CD4-positive, alpha-beta memory T cell (primary cell): ENCODE measurements at regions of chr14 and their contacts with region 1.

Region 1: DNA sequence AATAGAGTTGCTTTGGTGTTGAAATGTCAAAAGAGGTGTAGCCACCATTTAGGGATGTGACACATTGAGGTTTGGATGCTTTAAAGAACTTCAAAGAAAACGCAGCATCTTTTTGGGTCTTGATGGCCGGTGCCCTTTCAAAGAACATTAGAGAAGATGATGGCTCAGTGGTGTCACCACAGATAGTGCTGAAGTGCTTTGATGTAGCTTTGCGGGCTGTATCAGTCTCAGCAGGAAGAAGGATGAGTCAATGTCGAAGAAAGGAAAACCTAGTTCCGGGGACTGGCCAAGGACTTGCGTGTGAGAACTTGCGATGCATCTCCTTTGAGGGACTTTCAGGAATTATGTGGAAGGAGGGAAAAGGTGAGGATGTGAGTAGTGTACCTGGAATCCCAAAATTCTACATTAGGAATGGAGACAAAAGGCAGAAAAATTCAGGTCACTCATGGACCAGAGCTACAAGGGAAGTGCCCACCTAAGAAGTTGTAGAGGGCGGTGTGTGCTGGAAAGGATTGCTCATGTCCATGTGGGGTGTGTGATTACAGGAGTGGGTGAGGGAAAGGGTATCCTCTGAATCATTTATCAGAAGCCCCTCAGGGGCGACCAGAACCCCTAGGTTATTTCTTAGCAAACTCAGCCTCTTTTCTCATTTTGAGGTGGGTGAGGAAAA is 39.7 kb upstream of the GZMB start:
- DNase-seq: peak; percentile 74 to 88 (median 76)
- H3K4me3 ChIP-seq: peak overlapping the region; percentile 39 to 49
- H3K4me3 Mint-ChIP-seq: peak overlapping the region; percentile 76 to 92 (median 84)
- H3K27ac ChIP-seq: peak overlapping the region; percentile 25
- H3K27ac Mint-ChIP-seq: peak overlapping the region; percentile 89 to 97 (median 93)
- H3K4me1 ChIP-seq: peaks cover 31% of the 10 kb centered on the region
- H3K4me1 Mint-ChIP-seq: peaks cover 26 to 48% (median 34%) of the 10 kb centered on the region in 4 donors
- H3K27me3 ChIP-seq: no peaks in the 10 kb centered on the region
- H3K27me3 Mint-ChIP-seq: no peaks in the 10 kb centered on the region

Region 2: GRCh38 chr14:24481622-24482324 is 191.9 kb before region 1 on chr14:
- CTCF ChIA-PET with region 1: interaction called, 14 read pairs
- POLR2A ChIA-PET with region 1: interaction called, 4 read pairs
- intact Hi-C with region 1: loop called (anchors 2 kb)
- DNase-seq: peak in 4 of 5 donors; percentile 18 to 38 (median 25)
- H3K4me3 ChIP-seq: no peak overlapping the region
- H3K4me3 Mint-ChIP-seq: peak overlapping the region in 5 of 8 donors; percentile 38 to 61 (median 51)
- H3K27ac ChIP-seq: no peak overlapping the region
- H3K27ac Mint-ChIP-seq: peak overlapping the region in 4 of 7 donors; percentile 4 to 57 (median 26)
- H3K4me1 ChIP-seq: peaks cover 17% of the 10 kb centered on the region
- H3K4me1 Mint-ChIP-seq: peaks cover 0 to 29% (median 20%) of the 10 kb centered on the region in 4 donors
- H3K27me3 ChIP-seq: no peaks in the 10 kb centered on the region
- H3K27me3 Mint-ChIP-seq: no peaks in the 10 kb centered on the region

Region 3: DNA sequence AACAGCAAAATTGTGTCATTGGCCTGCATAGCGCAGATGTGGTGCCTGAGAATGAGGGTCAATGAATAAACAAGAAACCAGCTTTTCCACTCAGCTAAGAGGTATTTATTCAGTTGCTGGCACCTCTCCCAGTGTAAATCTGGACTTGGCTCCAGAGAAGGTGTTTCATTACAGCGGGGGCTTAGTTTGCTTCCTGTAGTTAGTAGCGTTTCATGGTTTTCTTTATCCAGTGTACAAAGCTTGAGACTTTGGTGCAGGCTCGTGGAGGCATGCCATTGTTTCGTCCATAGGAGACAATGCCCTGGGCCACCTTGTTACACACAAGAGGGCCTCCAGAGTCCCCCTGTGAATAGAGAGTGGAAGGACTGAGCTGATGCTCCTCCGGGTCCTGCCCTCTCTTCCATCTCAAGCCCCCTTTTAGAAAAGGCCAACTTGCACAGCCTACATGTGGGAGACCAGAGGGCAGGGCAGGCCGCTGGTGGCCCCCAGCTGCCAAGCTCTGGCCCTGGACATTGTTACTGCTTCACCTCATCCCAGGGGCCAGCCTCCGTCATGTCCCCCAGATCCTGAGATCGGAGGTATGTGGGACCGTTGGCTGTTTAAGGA is 42.7 kb before region 1 on chr14:
- CTCF ChIA-PET with region 1: no interaction called
- POLR2A ChIA-PET with region 1: no interaction called
- intact Hi-C with region 1: no loop called
- DNase-seq: no peak
- H3K4me3 ChIP-seq: no peak overlapping the region
- H3K4me3 Mint-ChIP-seq: no peak overlapping the region
- H3K27ac ChIP-seq: no peak overlapping the region
- H3K27ac Mint-ChIP-seq: no peak overlapping the region
- H3K4me1 ChIP-seq: no peaks in the 10 kb centered on the region
- H3K4me1 Mint-ChIP-seq: peaks cover 1 to 9% (median 5%) of the 10 kb centered on the region in 4 donors
- H3K27me3 ChIP-seq: no peaks in the 10 kb centered on the region
- H3K27me3 Mint-ChIP-seq: peaks cover 0 to 2% of the 10 kb centered on the region in 2 donors

Region 4: DNA sequence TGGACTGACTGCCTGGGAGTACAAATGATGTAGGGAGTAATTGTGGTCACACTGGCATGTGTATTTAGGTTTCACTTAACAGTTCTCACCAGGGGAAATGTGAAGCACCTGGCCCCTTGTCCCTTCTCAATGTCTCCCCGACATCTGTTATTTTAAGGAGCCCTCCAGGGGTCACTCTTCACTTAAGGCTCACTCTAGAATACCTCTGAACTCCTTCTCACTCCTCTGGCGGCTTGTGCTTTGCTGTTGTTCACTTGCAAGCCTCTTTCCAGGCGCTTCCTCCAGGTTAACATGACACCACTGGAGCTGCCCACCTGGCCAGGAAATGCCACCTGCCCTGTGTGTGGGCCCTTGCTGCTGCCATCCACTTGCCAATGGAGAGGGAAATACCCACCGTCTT is 16.8 kb after region 1 on chr14:
- CTCF ChIA-PET with region 1: interaction called, 17 read pairs
- POLR2A ChIA-PET with region 1: interaction called, 23 read pairs
- intact Hi-C with region 1: loop called (anchors 1 kb)
- DNase-seq: no peak
- H3K4me3 ChIP-seq: no peak overlapping the region
- H3K4me3 Mint-ChIP-seq: no peak overlapping the region
- H3K27ac ChIP-seq: no peak overlapping the region
- H3K27ac Mint-ChIP-seq: no peak overlapping the region
- H3K4me1 ChIP-seq: peaks cover 37% of the 10 kb centered on the region
- H3K4me1 Mint-ChIP-seq: peaks cover 11 to 17% (median 14%) of the 10 kb centered on the region in 4 donors
- H3K27me3 ChIP-seq: no peaks in the 10 kb centered on the region
- H3K27me3 Mint-ChIP-seq: no peaks in the 10 kb centered on the region

Region 5: DNA sequence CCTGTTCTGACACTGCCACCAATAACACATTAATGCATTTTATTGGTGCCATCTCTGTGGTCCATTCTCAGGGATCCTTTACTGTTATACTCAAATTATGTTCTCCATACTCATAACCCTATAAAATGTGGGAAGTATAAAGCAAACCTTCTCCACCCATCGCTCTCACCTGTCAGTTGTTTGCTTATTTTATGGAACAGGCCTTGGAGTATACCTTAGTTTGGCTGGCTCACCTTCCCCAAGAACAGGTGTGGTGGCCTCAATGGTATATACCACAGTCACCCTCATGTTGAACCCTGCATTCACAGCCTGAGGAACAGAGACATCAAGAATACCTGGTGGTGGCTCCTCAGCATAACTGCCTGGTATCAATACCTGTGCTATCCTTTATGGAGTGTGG is 684.7 kb after region 1 on chr14:
- CTCF ChIA-PET with region 1: no interaction called
- POLR2A ChIA-PET with region 1: no interaction called
- intact Hi-C with region 1: no loop called
- DNase-seq: no peak
- H3K4me3 ChIP-seq: no peak overlapping the region
- H3K4me3 Mint-ChIP-seq: no peak overlapping the region
- H3K27ac ChIP-seq: no peak overlapping the region
- H3K27ac Mint-ChIP-seq: no peak overlapping the region
- H3K4me1 ChIP-seq: no peaks in the 10 kb centered on the region
- H3K4me1 Mint-ChIP-seq: no peaks in the 10 kb centered on the region
- H3K27me3 ChIP-seq: no peaks in the 10 kb centered on the region
- H3K27me3 Mint-ChIP-seq: no peaks in the 10 kb centered on the region